CD4-positive, alpha-beta T cell (primary cell): ENCODE measurements at regions of chr2 and their contacts with region 1.

Region 1: DNA sequence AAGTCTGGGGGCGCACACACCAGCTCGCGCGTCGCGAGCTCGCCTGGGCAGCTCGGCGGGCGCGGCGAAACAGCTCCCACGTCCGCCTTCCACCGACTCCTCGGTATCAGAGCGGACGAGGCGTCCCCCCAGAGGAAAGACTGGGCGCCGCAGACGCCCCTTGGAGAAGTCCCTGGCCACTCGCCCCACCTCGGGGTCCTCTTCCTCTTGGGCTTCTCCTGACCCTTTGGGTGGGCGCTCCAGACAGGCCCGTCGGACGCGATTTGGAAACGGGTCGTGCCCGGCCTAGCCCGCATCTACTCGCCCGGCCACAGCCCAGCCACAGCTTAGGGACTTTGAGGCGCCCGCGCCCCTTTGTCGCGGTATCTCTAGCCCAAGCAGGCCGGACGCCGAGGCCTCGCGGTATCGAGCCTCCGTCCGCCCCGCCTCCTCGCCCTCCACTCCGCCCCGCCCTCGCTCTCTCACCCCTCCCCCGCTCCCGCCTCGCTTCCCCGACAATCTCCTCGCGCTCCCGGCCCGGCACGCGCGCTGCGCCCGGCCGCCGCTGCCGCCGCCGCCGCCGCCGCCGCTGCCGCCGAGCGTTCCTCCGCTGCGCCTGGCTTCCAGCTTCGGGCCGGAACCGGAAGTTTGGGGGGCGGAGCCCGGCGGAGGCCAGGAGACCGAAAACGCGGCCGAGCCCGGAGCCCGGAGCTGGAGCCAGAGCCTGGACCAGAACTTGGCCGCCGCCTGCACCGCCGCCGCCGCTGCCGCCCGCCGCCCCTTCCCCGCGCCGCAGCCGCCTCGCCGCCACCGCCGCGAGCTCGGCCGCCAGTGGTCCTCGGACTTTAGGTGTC is 749 bp upstream of the ACVR2A start:
- DNase-seq: peak; percentile 80 to 94 (median 84)
- ATAC-seq: peak; percentile 79
- H3K4me3 ChIP-seq: peak overlapping the region; percentile 84
- H3K4me3 Mint-ChIP-seq: peak overlapping the region; percentile 96
- H3K27ac ChIP-seq: peak overlapping the region in 1 of 2 donors; percentile 38
- H3K27ac Mint-ChIP-seq: peak overlapping the region; percentile 87
- H3K4me1 ChIP-seq: peaks cover 19% of the 10 kb centered on the region
- H3K4me1 Mint-ChIP-seq: peaks cover 42% of the 10 kb centered on the region
- H3K27me3 ChIP-seq: no peaks in the 10 kb centered on the region
- H3K27me3 Mint-ChIP-seq: peaks cover 5% of the 10 kb centered on the region
- CTCF ChIP-seq: no peak

Region 2: DNA sequence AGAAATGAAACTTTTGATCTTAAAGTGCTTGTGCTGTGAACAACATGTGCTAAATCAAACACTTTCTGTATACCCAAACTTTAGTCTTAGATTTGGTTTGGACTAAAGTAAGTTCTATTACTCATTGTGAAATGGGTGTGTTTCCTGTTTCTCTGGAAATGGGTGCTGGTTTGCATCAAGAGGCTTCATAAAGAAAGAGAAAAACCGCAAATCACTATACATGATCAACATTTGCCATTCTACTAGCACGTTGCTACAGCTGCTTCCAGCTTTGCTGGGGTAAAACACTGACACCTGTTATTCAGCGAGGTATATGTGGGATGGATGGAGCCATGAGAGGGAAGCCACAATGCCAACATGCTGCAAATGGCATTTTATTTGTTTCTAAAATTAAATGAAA is 546.3 kb before region 1 on chr2:
- CTCF ChIA-PET with region 1: no interaction called
- POLR2A ChIA-PET with region 1: interaction called, 4 read pairs
- intact Hi-C with region 1: loop called in 1 of 2 experiments (anchors 5 kb)
- DNase-seq: peak in 8 of 14 experiments; percentile 3 to 78 (median 28)
- ATAC-seq: peak; percentile 78
- H3K4me3 ChIP-seq: no peak overlapping the region
- H3K4me3 Mint-ChIP-seq: peak overlapping the region; percentile 48
- H3K27ac ChIP-seq: peak overlapping the region in 1 of 2 donors; percentile 53
- H3K27ac Mint-ChIP-seq: peak overlapping the region; percentile 87
- H3K4me1 ChIP-seq: peaks cover 24% of the 10 kb centered on the region
- H3K4me1 Mint-ChIP-seq: peaks cover 55% of the 10 kb centered on the region
- H3K27me3 ChIP-seq: no peaks in the 10 kb centered on the region
- H3K27me3 Mint-ChIP-seq: no peaks in the 10 kb centered on the region
- CTCF ChIP-seq: no peak

Region 3: DNA sequence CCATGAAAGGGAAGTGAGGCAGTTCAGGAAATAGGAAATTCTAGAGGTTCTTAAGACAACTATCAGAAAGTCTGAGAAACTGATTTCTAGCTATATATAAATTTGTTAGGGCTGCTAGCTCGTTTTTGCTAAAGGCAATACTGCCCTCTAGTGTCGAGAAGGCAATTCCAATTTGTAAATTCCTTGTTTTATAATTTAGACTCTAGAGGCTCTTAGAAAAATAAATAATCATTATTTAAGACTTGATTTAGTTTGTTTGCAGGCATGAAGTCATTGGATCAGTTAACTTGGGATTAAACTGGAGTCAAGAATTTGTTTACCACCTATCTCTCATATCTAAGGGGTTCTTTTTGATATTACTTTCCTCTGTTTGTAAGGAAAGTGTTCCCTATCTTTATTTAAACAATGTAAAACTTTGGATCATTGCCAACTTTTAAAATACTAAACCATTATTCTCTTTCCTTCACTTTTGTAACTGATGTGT is 67.0 kb after region 1 on chr2:
- CTCF ChIA-PET with region 1: interaction called, 4 read pairs
- POLR2A ChIA-PET with region 1: interaction called, 6 read pairs
- intact Hi-C with region 1: loop called in 1 of 2 experiments (anchors 5 kb)
- DNase-seq: peak in 10 of 14 experiments; percentile 2 to 76 (median 18)
- ATAC-seq: no peak
- H3K4me3 ChIP-seq: no peak overlapping the region
- H3K4me3 Mint-ChIP-seq: no peak overlapping the region
- H3K27ac ChIP-seq: no peak overlapping the region
- H3K27ac Mint-ChIP-seq: no peak overlapping the region
- H3K4me1 ChIP-seq: no peaks in the 10 kb centered on the region
- H3K4me1 Mint-ChIP-seq: peaks cover 11% of the 10 kb centered on the region
- H3K27me3 ChIP-seq: no peaks in the 10 kb centered on the region
- H3K27me3 Mint-ChIP-seq: no peaks in the 10 kb centered on the region
- CTCF ChIP-seq: peak; percentile 95

Region 4: DNA sequence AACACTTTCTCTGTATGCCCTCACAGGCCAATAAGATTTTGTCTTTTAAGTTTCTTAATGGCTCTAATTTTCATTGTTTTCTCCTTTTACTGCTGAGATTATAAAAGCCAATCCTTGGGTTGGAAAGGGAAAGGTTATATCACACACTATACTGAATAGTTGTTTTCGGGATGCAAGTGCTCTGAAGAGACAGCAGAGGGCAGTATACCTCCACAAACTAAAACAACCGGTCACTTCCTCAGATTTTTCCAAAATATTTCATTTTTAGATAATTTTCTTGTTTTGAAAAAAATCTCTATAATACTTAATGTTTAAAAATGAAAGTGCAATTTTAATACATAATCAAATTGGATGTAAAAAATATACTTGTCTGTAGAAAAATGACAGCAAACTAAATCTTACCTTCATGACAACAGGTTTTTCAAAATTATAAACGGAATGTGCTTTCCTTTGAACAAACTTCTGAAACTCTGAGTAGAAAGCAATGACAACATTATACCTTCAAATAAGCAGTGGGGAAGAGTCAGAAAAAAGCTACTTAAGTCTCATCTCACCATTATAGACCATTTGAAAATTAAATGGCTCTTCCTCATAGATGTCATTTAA is 93.8 kb after region 1 on chr2:
- CTCF ChIA-PET with region 1: no interaction called
- POLR2A ChIA-PET with region 1: no interaction called
- intact Hi-C with region 1: no loop called
- DNase-seq: peak in 3 of 14 experiments; percentile 35 to 57 (median 43)
- ATAC-seq: peak; percentile 68
- H3K4me3 ChIP-seq: no peak overlapping the region
- H3K4me3 Mint-ChIP-seq: no peak overlapping the region
- H3K27ac ChIP-seq: no peak overlapping the region
- H3K27ac Mint-ChIP-seq: no peak overlapping the region
- H3K4me1 ChIP-seq: no peaks in the 10 kb centered on the region
- H3K4me1 Mint-ChIP-seq: no peaks in the 10 kb centered on the region
- H3K27me3 ChIP-seq: no peaks in the 10 kb centered on the region
- H3K27me3 Mint-ChIP-seq: no peaks in the 10 kb centered on the region
- CTCF ChIP-seq: peak; percentile 97

Region 5: DNA sequence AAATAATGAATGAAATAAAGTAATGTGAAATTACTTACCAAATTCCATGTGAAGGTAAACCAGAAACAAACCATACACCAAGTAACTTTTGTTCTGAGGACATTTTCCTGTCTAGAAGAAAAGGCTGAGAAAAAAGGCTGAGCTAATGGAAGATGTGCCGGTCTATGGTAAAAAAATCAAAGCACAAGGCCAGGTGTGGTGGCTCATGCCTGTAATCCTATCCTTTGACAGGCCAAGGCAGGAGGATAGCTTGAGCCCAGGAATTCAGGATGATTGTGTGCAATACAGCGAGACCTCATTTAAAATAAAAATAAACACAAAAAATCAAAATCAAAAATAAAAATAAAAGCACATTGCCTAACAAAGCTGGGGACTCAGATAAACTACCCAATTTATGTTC is 169.8 kb after region 1 on chr2:
- CTCF ChIA-PET with region 1: no interaction called
- POLR2A ChIA-PET with region 1: no interaction called
- intact Hi-C with region 1: no loop called
- DNase-seq: no peak
- ATAC-seq: no peak
- H3K4me3 ChIP-seq: no peak overlapping the region
- H3K4me3 Mint-ChIP-seq: no peak overlapping the region
- H3K27ac ChIP-seq: no peak overlapping the region
- H3K27ac Mint-ChIP-seq: no peak overlapping the region
- H3K4me1 ChIP-seq: no peaks in the 10 kb centered on the region
- H3K4me1 Mint-ChIP-seq: peaks cover 79% of the 10 kb centered on the region
- H3K27me3 ChIP-seq: no peaks in the 10 kb centered on the region
- H3K27me3 Mint-ChIP-seq: no peaks in the 10 kb centered on the region
- CTCF ChIP-seq: no peak

Region 6: GRCh38 chr2:148534416-148535204 is 690.5 kb after region 1 on chr2:
- CTCF ChIA-PET with region 1: no interaction called
- POLR2A ChIA-PET with region 1: no interaction called
- intact Hi-C with region 1: loop called in 1 of 2 experiments (anchors 10 kb)
- DNase-seq: no peak
- ATAC-seq: no peak
- H3K4me3 ChIP-seq: no peak overlapping the region
- H3K4me3 Mint-ChIP-seq: no peak overlapping the region
- H3K27ac ChIP-seq: no peak overlapping the region
- H3K27ac Mint-ChIP-seq: no peak overlapping the region
- H3K4me1 ChIP-seq: peaks cover 59% of the 10 kb centered on the region
- H3K4me1 Mint-ChIP-seq: peaks cover 64% of the 10 kb centered on the region
- H3K27me3 ChIP-seq: no peaks in the 10 kb centered on the region
- H3K27me3 Mint-ChIP-seq: no peaks in the 10 kb centered on the region
- CTCF ChIP-seq: no peak

Region 7: GRCh38 chr2:149587220-149587949 is 1743.3 kb after region 1 on chr2 and contains the start of gene MMADHC:
- CTCF ChIA-PET with region 1: no interaction called
- POLR2A ChIA-PET with region 1: no interaction called
- intact Hi-C with region 1: loop called in 1 of 2 experiments (anchors 10 kb)
- DNase-seq: peak; percentile 86 to 97 (median 92)
- ATAC-seq: peak; percentile 94
- H3K4me3 ChIP-seq: peak within 1 kb of the TSS; percentile 84
- H3K4me3 Mint-ChIP-seq: peak within 1 kb of the TSS; percentile 96
- H3K27ac ChIP-seq: peak within 1 kb of the TSS; percentile 89 to 93
- H3K27ac Mint-ChIP-seq: peak within 1 kb of the TSS; percentile 98
- H3K4me1 ChIP-seq: peaks cover 14% of the 10 kb centered on the region
- H3K4me1 Mint-ChIP-seq: peaks cover 51% of the 10 kb centered on the region
- H3K27me3 ChIP-seq: peaks cover 0 to 16% of the 10 kb centered on the region in 2 experiments
- H3K27me3 Mint-ChIP-seq: peaks cover 23% of the 10 kb centered on the region
- CTCF ChIP-seq: no peak
- total RNA-seq, gene MMADHC: 77.3 to 77.8 TPM